Prostate gland (tissue), 2 donors: ENCODE measurements at regions of chr6 and their contacts with region 1.

Region 1: DNA sequence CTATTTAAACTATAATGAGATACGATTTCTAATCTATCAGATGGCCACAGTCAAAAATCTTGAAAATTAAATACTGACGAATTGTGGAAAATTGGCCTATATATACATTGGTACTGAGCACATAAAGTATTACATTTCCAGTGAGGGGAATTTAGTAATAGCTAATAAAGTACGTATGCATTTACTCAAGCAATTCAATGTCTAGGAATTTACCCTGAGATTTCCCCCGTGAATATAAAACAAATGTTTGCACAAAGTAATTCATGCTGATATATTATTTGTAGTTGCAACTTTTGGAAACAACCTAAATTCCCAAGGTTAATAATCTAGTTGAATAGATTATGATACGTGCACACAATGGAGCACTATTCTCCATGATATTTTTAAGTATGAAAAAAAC is 14.7 kb upstream of the C6orf141 start:
- DNase-seq: no peak
- H3K4me3 ChIP-seq: no peak overlapping the region
- H3K27ac ChIP-seq: no peak overlapping the region
- H3K4me1 ChIP-seq: no peaks in the 10 kb centered on the region
- H3K27me3 ChIP-seq: no peaks in the 10 kb centered on the region
- CTCF ChIP-seq: no peak
- POLR2A ChIP-seq: no peak

Region 2: DNA sequence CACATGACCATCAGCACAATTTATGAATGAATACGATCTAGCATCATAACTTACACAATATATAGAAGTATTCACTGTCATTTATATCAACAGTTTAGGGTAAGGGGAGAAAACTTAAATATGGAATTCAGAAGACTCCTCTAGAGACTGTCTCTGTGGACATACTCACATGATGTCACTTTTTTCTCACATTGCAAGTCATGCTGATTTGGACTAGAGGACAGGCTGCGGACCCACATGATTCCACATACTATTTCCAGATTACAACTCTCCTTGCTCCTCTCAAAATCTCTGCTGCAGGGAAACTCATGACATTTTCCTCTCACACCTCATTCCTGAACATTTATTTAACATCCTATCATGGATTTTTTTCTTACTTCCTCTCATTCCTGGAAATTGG is 317.2 kb after region 1 on chr6:
- intact Hi-C with region 1: loop called (anchors 5 kb)
- DNase-seq: no peak
- H3K4me3 ChIP-seq: no peak overlapping the region
- H3K27ac ChIP-seq: no peak overlapping the region
- H3K4me1 ChIP-seq: no peaks in the 10 kb centered on the region
- H3K27me3 ChIP-seq: no peaks in the 10 kb centered on the region
- CTCF ChIP-seq: no peak
- POLR2A ChIP-seq: no peak